Endothelial cell of umbilical vein (primary cell): ENCODE measurements at regions of chr4 and their contacts with region 1.

Region 1: GRCh38 chr4:85747882-85748491 is 273.0 kb downstream of the ARHGAP24 start:
- DNase-seq: peak; percentile 76
- H3K4me3 ChIP-seq: no peak overlapping the region
- H3K27ac ChIP-seq: no peak overlapping the region
- H3K4me1 ChIP-seq: peaks cover 9% of the 10 kb centered on the region
- H3K27me3 ChIP-seq: no peaks in the 10 kb centered on the region
- CTCF ChIP-seq: peak; percentile 71 to 72
- POLR2A ChIP-seq: no peak

Region 2: GRCh38 chr4:85127653-85128052 is 620.3 kb before region 1 on chr4:
- CTCF ChIA-PET with region 1: interaction called, 24 read pairs
- POLR2A ChIA-PET with region 1: no interaction called
- dilution Hi-C with region 1: no loop called
- intact Hi-C with region 1: loop called (anchors 1 kb)
- DNase-seq: peak; percentile 17
- H3K4me3 ChIP-seq: no peak overlapping the region
- H3K27ac ChIP-seq: no peak overlapping the region
- H3K4me1 ChIP-seq: no peaks in the 10 kb centered on the region
- H3K27me3 ChIP-seq: peaks cover 0 to 3% of the 10 kb centered on the region in 2 experiments
- CTCF ChIP-seq: peak; percentile 46 to 61
- POLR2A ChIP-seq: no peak

Region 3: GRCh38 chr4:85147439-85148076 is 600.4 kb before region 1 on chr4:
- CTCF ChIA-PET with region 1: interaction called, 93 read pairs
- POLR2A ChIA-PET with region 1: no interaction called
- dilution Hi-C with region 1: no loop called
- intact Hi-C with region 1: loop called (anchors 1 kb)
- DNase-seq: peak; percentile 66
- H3K4me3 ChIP-seq: no peak overlapping the region
- H3K27ac ChIP-seq: no peak overlapping the region
- H3K4me1 ChIP-seq: no peaks in the 10 kb centered on the region
- H3K27me3 ChIP-seq: peaks cover 12 to 32% of the 10 kb centered on the region in 2 experiments
- CTCF ChIP-seq: peak; percentile 38 to 44
- POLR2A ChIP-seq: no peak

Region 4: DNA sequence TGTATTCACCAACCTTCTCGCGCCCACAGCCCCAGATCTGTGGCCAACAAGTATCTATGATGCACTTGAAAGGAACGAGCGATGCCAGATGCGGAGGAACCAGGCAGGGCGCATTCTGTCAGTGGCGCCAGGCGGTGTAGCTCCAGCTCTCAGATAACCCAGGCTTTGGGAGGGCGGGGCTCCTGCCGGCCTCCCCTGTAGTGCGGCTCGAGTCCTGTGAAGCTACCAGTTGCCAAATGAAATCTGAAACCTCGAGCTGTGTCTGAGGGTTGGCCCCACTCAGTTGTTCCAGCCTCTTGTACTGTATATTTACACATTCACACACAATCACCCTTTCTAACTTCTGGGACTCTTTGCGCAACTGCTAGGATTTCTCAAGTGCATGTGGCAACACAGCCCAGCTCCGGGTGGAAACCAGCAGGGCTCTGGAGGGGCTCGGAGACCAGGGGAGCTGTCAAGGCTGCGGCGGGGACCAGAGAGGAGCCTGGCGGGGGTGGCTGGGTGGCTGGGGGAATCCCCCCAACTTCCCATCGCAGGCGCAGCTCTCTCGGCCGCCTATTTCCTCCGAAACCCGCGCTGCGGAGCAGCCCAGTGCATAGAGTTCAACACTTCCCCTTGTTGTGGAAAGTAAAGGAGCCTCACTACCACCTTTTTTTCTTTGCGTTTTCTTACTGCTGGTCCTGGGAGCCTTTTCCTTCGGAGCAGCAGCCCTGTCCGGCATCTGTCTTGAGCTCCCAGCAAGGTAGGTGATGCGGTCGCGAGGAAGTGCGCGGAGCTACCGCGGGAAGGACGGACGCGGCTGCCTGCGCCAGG is 273.0 kb before region 1 on chr4 and contains the start of gene ARHGAP24:
- CTCF ChIA-PET with region 1: interaction called, 7 read pairs
- POLR2A ChIA-PET with region 1: no interaction called
- dilution Hi-C with region 1: no loop called
- intact Hi-C with region 1: loop called (anchors 5 kb)
- DNase-seq: peak; percentile 76
- H3K4me3 ChIP-seq: peak within 1 kb of the TSS; percentile 14 to 45 (median 41)
- H3K27ac ChIP-seq: no peak within 1 kb of the TSS
- H3K4me1 ChIP-seq: no peaks in the 10 kb centered on the region
- H3K27me3 ChIP-seq: peaks cover 26 to 33% of the 10 kb centered on the region in 2 experiments
- CTCF ChIP-seq: no peak
- POLR2A ChIP-seq: no peak
- total RNA-seq, gene ARHGAP24: 79.4 and 87.5 TPM in 2 replicates

Region 5: GRCh38 chr4:85736571-85736970 is 11.4 kb before region 1 on chr4:
- CTCF ChIA-PET with region 1: interaction called, 17 read pairs
- POLR2A ChIA-PET with region 1: no interaction called
- dilution Hi-C with region 1: no loop called
- intact Hi-C with region 1: no loop called
- DNase-seq: no peak
- H3K4me3 ChIP-seq: no peak overlapping the region
- H3K27ac ChIP-seq: no peak overlapping the region
- H3K4me1 ChIP-seq: peaks cover 7% of the 10 kb centered on the region
- H3K27me3 ChIP-seq: no peaks in the 10 kb centered on the region
- CTCF ChIP-seq: no peak
- POLR2A ChIP-seq: no peak

Region 6: GRCh38 chr4:85854546-85854945 is 106.6 kb after region 1 on chr4:
- CTCF ChIA-PET with region 1: no interaction called
- POLR2A ChIA-PET with region 1: no interaction called
- dilution Hi-C with region 1: no loop called
- intact Hi-C with region 1: no loop called
- DNase-seq: peak; percentile 44
- H3K4me3 ChIP-seq: no peak overlapping the region
- H3K27ac ChIP-seq: peak overlapping the region; percentile 11
- H3K4me1 ChIP-seq: peaks cover 16% of the 10 kb centered on the region
- H3K27me3 ChIP-seq: no peaks in the 10 kb centered on the region
- CTCF ChIP-seq: no peak
- POLR2A ChIP-seq: no peak

Region 7: DNA sequence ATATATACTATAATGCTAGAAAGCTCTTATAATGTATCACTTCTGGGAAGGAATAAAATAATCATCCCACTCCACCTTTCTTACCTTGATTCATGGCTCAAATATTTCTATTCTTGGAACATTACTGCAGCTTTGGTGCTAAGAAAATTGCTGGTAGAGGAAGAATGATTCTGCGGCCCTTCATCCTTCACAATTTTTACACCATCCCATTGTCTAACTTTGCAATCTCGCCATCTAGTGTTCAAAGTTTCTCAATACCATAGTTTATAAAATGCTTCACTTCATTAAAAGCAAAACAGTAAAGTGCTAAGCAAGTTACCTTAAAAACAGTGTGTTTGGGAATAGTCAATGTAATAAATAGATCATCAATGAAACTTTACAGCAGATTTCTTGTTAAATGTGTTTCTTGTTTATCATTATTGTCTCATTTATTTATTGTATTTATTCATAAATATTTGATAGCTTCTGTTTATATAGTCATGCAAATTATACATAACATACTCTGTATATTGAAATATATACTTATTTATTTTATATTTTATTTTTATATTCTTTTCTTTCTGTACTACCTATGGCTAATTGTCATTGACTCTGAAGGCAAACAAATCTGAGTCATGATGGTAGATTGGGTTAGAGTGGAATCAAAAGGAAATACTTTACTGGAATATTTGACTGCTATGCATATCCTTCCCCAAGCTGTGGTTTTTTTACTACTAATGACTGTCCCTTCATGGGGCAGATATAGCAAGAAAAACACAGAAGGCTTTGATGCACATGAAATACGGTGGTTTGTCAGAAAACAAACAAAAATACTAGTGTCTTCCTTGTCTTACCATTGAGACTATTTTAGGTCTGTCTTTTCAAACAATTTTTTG is 221.2 kb after region 1 on chr4:
- CTCF ChIA-PET with region 1: interaction called, 9 read pairs
- POLR2A ChIA-PET with region 1: no interaction called
- dilution Hi-C with region 1: no loop called
- intact Hi-C with region 1: loop called (anchors 2 kb)
- DNase-seq: peak; percentile 82
- H3K4me3 ChIP-seq: no peak overlapping the region
- H3K27ac ChIP-seq: peak overlapping the region; percentile 43
- H3K4me1 ChIP-seq: peaks cover 52% of the 10 kb centered on the region
- H3K27me3 ChIP-seq: no peaks in the 10 kb centered on the region
- CTCF ChIP-seq: peak; percentile 16 to 38
- POLR2A ChIP-seq: no peak

Region 8: DNA sequence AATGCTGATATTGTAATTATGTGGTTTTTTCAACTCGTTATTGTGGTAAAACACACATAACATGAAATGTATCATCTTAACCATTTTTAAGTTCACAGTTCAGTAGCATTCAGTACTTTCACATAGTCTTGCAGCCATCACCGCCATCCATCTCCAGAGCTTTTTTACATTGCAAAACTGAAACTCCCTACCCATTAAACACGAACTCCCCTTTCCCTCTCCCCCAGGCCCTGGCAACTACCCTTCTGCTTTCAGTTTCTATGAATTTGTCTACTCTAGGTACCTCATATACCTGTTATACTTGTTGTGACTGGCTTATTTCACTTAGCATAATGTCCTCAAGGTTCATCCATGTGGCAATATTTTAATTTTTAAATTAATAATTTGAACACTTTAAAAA is 231.3 kb after region 1 on chr4:
- CTCF ChIA-PET with region 1: no interaction called
- POLR2A ChIA-PET with region 1: no interaction called
- dilution Hi-C with region 1: no loop called
- intact Hi-C with region 1: no loop called
- DNase-seq: no peak
- H3K4me3 ChIP-seq: no peak overlapping the region
- H3K27ac ChIP-seq: no peak overlapping the region
- H3K4me1 ChIP-seq: no peaks in the 10 kb centered on the region
- H3K27me3 ChIP-seq: no peaks in the 10 kb centered on the region
- CTCF ChIP-seq: no peak
- POLR2A ChIP-seq: no peak

Region 9: GRCh38 chr4:86043755-86044592 is 296.0 kb after region 1 on chr4:
- CTCF ChIA-PET with region 1: interaction called, 14 read pairs
- POLR2A ChIA-PET with region 1: no interaction called
- dilution Hi-C with region 1: no loop called
- intact Hi-C with region 1: no loop called
- DNase-seq: peak; percentile 77
- H3K4me3 ChIP-seq: no peak overlapping the region
- H3K27ac ChIP-seq: no peak overlapping the region
- H3K4me1 ChIP-seq: no peaks in the 10 kb centered on the region
- H3K27me3 ChIP-seq: peaks cover 6 to 17% of the 10 kb centered on the region in 2 experiments
- CTCF ChIP-seq: peak; percentile 32 to 41
- POLR2A ChIP-seq: no peak